Transverse colon (tissue), 4 donors: ENCODE measurements at regions of chr4 and their contacts with region 1.

Region 1: GRCh38 chr4:77203380-77204197 is 46.6 kb downstream of the CCNG2 start:
- DNase-seq: peak; percentile 64
- H3K4me3 ChIP-seq: no peak overlapping the region
- H3K27ac ChIP-seq: no peak overlapping the region
- H3K4me1 ChIP-seq: peaks cover 0 to 5% (median 2%) of the 10 kb centered on the region in 4 donors
- H3K27me3 ChIP-seq: no peaks in the 10 kb centered on the region
- CTCF ChIP-seq: peak; percentile 68 to 81 (median 74)
- EP300 ChIP-seq: no peak
- POLR2A ChIP-seq: no peak

Region 2: DNA sequence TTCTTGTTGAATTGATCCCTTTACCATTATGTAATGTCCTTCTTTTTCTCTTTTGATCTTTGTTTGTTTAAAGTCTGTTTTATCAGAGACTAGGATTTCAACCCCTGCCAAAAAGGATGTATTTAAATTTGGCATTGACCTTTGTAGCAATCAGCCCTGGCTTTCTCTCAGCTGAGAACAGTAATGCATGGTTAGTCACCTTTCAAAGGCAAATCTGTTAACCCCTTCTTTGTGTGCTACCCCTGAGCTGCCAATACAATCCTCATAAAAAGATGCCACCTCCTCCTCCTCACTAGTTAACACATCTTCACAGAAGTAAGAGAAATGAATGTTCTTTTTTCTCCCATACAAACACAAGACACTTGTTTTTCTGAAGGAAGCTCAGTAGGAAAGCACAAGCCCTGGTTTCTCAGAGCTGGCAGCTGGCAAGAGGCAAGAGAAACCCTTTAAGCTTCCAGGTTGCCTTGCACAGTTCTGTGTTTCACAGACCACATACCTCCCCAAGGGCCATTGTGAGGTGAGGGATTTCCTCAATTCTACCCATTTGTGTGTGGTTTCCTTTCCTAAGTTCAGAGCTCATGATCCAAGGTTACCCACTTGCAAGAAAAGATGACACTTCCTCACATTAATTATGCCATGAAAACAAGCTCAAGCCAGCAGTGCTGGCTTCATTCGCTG is 1812.0 kb before region 1 on chr4:
- in situ Hi-C with region 1: no loop called
- intact Hi-C with region 1: no loop called
- DNase-seq: no peak
- H3K4me3 ChIP-seq: no peak overlapping the region
- H3K27ac ChIP-seq: no peak overlapping the region
- H3K4me1 ChIP-seq: no peaks in the 10 kb centered on the region
- H3K27me3 ChIP-seq: peaks cover 2% of the 10 kb centered on the region
- CTCF ChIP-seq: no peak
- EP300 ChIP-seq: no peak
- POLR2A ChIP-seq: no peak

Region 3: DNA sequence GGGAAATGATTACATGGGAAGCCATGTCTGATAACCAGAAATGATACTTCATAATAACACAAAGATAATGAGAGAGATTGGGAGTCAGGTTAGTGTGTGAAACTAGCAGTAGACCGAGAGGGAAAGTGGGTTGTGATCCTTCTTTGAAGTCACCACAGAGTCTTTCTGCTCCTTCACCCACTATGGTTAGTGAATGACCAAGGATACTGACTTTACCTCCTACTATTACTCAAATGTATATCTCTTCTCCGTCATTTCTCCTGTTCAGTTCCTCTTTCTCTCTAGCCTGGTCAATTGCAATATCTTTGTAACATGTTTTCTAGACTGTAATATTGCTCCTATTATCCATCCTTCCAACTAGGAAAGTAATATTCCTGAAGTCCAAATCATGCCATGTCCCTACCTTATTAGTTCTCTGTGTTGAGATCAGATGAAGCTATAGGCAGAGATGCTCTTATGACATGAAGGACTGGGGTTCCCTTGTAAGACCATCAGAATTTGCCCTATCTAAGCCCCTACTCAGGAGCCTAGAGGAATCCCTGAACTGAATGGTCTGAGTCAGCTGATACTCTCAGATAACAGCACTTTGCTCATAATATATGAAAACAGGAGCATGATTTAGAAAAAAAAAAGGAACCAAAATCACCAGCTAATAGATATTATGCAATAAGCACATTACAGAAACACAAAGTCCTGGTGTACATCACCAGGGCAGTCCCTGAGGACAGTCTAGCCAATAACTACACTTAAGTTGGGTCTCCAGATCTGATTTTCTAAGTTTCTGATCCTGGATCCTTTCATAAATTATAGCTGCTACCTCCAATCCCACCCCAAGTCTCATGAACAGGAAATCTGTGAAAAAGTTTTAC is 687.4 kb before region 1 on chr4:
- in situ Hi-C with region 1: loop called in 2 of 4 experiments (anchors 25 kb)
- intact Hi-C with region 1: loop called (anchors 10 kb)
- DNase-seq: no peak
- H3K4me3 ChIP-seq: no peak overlapping the region
- H3K27ac ChIP-seq: no peak overlapping the region
- H3K4me1 ChIP-seq: peaks cover 0 to 17% (median 8%) of the 10 kb centered on the region in 4 donors
- H3K27me3 ChIP-seq: no peaks in the 10 kb centered on the region
- CTCF ChIP-seq: no peak
- EP300 ChIP-seq: no peak
- POLR2A ChIP-seq: no peak

Region 4: DNA sequence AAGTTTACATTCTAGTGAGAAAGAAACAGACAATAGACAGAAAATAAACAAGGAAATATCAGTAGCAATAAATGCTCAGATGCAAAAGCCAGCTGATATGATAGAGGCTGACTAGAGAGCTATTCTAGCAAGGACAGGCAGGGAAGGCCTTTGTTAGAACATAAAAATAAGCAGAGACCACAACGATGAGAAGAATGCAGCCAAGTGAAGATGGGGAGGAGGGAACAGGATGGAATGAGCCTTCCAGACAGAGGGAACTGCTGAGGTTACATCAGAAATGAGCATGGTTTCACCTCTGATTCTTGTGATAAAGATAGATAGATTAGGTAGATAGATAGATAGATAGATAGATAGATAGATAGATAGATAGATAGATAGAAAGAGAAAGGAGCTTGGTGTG is 298.1 kb before region 1 on chr4:
- in situ Hi-C with region 1: no loop called
- intact Hi-C with region 1: no loop called
- DNase-seq: no peak
- H3K4me3 ChIP-seq: no peak overlapping the region
- H3K27ac ChIP-seq: no peak overlapping the region
- H3K4me1 ChIP-seq: peaks cover 0 to 12% (median 2%) of the 10 kb centered on the region in 4 donors
- H3K27me3 ChIP-seq: no peaks in the 10 kb centered on the region
- CTCF ChIP-seq: no peak
- EP300 ChIP-seq: no peak
- POLR2A ChIP-seq: no peak

Region 5: DNA sequence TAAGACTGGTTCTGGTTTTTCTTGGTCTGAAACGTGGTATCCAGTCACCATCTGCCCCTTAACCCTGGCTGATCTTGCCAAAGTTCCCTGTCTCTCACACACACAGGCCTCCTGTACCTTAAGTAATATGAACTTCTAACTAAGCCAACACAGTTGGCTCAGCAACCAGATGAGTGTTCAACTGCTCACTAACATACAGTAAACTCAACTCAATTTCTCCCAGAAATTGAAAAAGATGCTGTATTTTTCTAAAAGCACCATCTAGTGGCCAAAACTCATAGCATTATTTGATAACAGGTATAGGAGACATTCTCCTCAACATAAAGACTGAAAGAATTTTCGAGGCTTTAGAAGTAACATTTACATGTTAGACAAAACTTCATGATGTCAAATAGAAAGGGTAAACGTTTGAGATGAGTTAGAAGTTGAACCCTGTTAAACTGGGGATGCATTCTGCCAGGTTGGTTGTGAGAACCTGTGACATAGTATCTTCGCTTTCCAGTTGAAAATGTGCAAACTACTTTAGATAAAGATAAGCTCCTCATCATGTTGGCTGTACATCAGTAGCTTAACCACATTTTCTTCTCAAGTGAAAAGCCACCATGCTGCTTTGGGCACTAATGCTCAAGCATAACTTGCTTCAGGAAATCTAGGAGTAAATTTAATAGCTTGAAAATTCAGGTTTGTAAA is 159.0 kb before region 1 on chr4:
- in situ Hi-C with region 1: loop called in 1 of 4 experiments (anchors 10 kb)
- intact Hi-C with region 1: no loop called
- DNase-seq: no peak
- H3K4me3 ChIP-seq: no peak overlapping the region
- H3K27ac ChIP-seq: peak overlapping the region in 3 of 4 donors; percentile 32 to 47 (median 41)
- H3K4me1 ChIP-seq: peaks cover 0 to 22% (median 5%) of the 10 kb centered on the region in 4 donors
- H3K27me3 ChIP-seq: no peaks in the 10 kb centered on the region
- CTCF ChIP-seq: peak; percentile 47 to 69 (median 55)
- EP300 ChIP-seq: no peak
- POLR2A ChIP-seq: no peak

Region 6: GRCh38 chr4:77095101-77095821 is 108.3 kb before region 1 on chr4:
- in situ Hi-C with region 1: loop called in 3 of 4 experiments (anchors 10 kb)
- intact Hi-C with region 1: no loop called
- DNase-seq: peak; percentile 84
- H3K4me3 ChIP-seq: no peak overlapping the region
- H3K27ac ChIP-seq: no peak overlapping the region
- H3K4me1 ChIP-seq: peaks cover 0 to 3% (median 0%) of the 10 kb centered on the region in 4 donors
- H3K27me3 ChIP-seq: no peaks in the 10 kb centered on the region
- CTCF ChIP-seq: peak; percentile 78 to 87 (median 85)
- EP300 ChIP-seq: no peak
- POLR2A ChIP-seq: no peak

Region 7: GRCh38 chr4:77172336-77172735 is 31.3 kb before region 1 on chr4:
- in situ Hi-C with region 1: no loop called
- intact Hi-C with region 1: no loop called
- DNase-seq: no peak
- H3K4me3 ChIP-seq: no peak overlapping the region
- H3K27ac ChIP-seq: no peak overlapping the region
- H3K4me1 ChIP-seq: no peaks in the 10 kb centered on the region
- H3K27me3 ChIP-seq: no peaks in the 10 kb centered on the region
- CTCF ChIP-seq: no peak
- EP300 ChIP-seq: no peak
- POLR2A ChIP-seq: no peak

Region 8: DNA sequence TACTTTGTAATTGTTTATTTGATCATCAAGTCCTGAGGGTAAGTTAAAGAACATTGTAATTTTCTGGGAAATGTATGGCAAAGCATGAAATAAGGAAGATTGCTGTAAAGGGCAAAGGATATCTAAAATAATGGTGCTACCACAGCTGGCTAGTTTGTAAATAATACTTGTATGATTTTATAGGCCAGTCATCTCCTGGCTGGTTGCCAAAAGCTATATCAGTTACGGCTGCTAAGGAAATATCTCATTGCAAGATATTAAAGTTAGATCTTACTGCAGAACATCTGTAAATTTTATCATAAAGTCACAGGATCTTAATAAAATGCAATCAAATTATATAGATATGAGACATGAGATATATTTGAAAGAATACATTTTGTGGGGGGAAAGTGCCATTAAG is 251.3 kb after region 1 on chr4:
- in situ Hi-C with region 1: no loop called
- intact Hi-C with region 1: no loop called
- DNase-seq: no peak
- H3K4me3 ChIP-seq: no peak overlapping the region
- H3K27ac ChIP-seq: no peak overlapping the region
- H3K4me1 ChIP-seq: no peaks in the 10 kb centered on the region
- H3K27me3 ChIP-seq: no peaks in the 10 kb centered on the region
- CTCF ChIP-seq: no peak
- EP300 ChIP-seq: no peak
- POLR2A ChIP-seq: no peak